Activated CD4-positive, alpha-beta T cell treated with anti-CD3 and anti-CD28 coated beads, Interleukin-2, amount 10 ng/mL, durations not matched to agents 24 days and 14 days (primary cell): ENCODE measurements at regions of chr6 and their contacts with region 1.

Region 1: DNA sequence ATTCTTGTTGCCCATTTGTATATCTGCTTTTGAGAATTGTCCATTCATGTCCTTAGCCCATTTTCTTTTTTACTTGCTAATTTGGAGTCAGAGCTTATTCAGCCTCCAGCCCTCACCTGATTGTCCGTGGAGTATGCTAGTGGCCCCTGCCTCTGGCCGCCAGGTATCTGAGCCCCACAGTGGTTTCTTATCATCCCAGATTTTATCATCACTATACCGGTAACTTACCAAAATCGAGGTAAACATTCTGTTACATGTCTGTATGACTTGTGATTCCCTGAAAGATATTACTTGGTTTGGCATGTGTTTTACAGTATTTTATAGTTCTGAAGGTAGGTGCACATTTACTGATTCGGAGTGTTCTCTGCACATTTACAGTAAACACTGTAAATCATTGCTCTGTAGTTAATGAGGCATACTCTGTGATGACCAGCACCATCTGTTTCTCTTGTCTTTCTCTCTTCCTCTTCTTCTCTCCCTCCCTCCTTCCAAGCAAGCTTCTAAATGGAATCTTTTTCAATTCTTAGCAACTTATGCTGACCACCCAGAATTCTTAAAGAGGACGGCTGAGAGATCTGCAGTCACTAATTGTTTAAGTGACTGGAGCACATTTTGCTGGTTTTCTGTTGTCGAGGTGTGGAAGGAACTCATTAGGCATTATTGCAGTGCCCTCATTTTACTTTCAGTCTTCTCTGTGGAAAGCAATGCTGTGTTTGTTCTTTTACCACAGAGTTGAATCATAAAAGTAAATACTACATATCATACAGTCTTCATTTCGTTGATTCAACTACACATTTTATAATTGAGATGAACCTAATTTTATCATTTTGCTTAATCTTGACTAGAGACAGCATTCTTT is 126.4 kb downstream of the UTRN start:
- DNase-seq: no peak
- H3K4me3 Mint-ChIP-seq: peak overlapping the region; percentile 61
- H3K27ac Mint-ChIP-seq: peak overlapping the region; percentile 73
- H3K4me1 Mint-ChIP-seq: peaks cover 26% of the 10 kb centered on the region
- H3K27me3 Mint-ChIP-seq: no peaks in the 10 kb centered on the region

Region 2: GRCh38 chr6:144343701-144344428 is 67.7 kb before region 1 on chr6:
- intact Hi-C with region 1: loop called (anchors 5 kb)
- DNase-seq: peak; percentile 84
- H3K4me3 Mint-ChIP-seq: peak overlapping the region; percentile 89
- H3K27ac Mint-ChIP-seq: peak overlapping the region; percentile 96
- H3K4me1 Mint-ChIP-seq: peaks cover 59% of the 10 kb centered on the region
- H3K27me3 Mint-ChIP-seq: no peaks in the 10 kb centered on the region

Region 3: GRCh38 chr6:144395014-144395413 is 16.5 kb before region 1 on chr6:
- intact Hi-C with region 1: loop called (anchors 2 kb)
- DNase-seq: no peak
- H3K4me3 Mint-ChIP-seq: no peak overlapping the region
- H3K27ac Mint-ChIP-seq: no peak overlapping the region
- H3K4me1 Mint-ChIP-seq: peaks cover 9% of the 10 kb centered on the region
- H3K27me3 Mint-ChIP-seq: no peaks in the 10 kb centered on the region

Region 4: DNA sequence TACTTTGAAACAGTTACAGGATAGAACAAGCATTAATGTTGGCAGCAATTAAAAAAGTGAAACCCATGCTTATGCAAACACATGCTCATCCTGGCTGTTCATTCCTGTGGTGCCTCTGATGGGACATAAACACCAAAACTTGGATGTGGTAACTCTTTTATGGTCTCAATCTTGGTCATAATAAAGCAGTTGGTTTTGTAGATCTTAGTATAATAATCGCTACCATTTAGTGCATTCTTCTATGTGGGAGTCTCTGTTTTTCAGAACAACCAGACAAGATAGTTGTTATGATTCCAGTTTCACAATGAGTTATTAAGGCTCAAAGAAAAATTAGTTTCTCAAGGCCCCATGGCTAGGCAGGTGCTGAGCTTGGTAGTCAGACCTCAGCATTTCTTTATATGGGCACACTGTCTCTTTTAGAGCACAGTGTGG is 57.6 kb after region 1 on chr6:
- intact Hi-C with region 1: loop called (anchors 5 kb)
- DNase-seq: no peak
- H3K4me3 Mint-ChIP-seq: peak overlapping the region; percentile 74
- H3K27ac Mint-ChIP-seq: peak overlapping the region; percentile 90
- H3K4me1 Mint-ChIP-seq: peaks cover 22% of the 10 kb centered on the region
- H3K27me3 Mint-ChIP-seq: no peaks in the 10 kb centered on the region

Region 5: GRCh38 chr6:144939921-144940320 is 528.4 kb after region 1 on chr6:
- intact Hi-C with region 1: no loop called
- DNase-seq: no peak
- H3K4me3 Mint-ChIP-seq: no peak overlapping the region
- H3K27ac Mint-ChIP-seq: no peak overlapping the region
- H3K4me1 Mint-ChIP-seq: no peaks in the 10 kb centered on the region
- H3K27me3 Mint-ChIP-seq: peaks cover 19% of the 10 kb centered on the region

Region 6: GRCh38 chr6:145544041-145544440 is 1132.5 kb after region 1 on chr6:
- intact Hi-C with region 1: no loop called
- DNase-seq: no peak
- H3K4me3 Mint-ChIP-seq: no peak overlapping the region
- H3K27ac Mint-ChIP-seq: no peak overlapping the region
- H3K4me1 Mint-ChIP-seq: no peaks in the 10 kb centered on the region
- H3K27me3 Mint-ChIP-seq: no peaks in the 10 kb centered on the region